Dendritic cell treated with granulocyte-macrophage colony-stimulating factor and Interleukin-4, amounts not matched to agents 40 ng/mL and 50 ng/mL, for 4 days (primary cell): ENCODE measurements at regions of chr11 and their contacts with region 1.

Region 1: GRCh38 chr11:60615497-60615896 is 83.9 kb upstream of the MS4A8 start:
- H3K4me3 Mint-ChIP-seq: no peak overlapping the region
- H3K27ac Mint-ChIP-seq: no peak overlapping the region
- H3K4me1 Mint-ChIP-seq: peaks cover 5% of the 10 kb centered on the region
- H3K27me3 Mint-ChIP-seq: no peaks in the 10 kb centered on the region

Region 2: GRCh38 chr11:60345489-60345888 is 270.0 kb before region 1 on chr11:
- intact Hi-C with region 1: loop called (anchors 5 kb)
- H3K4me3 Mint-ChIP-seq: no peak overlapping the region
- H3K27ac Mint-ChIP-seq: no peak overlapping the region
- H3K4me1 Mint-ChIP-seq: peaks cover 50% of the 10 kb centered on the region
- H3K27me3 Mint-ChIP-seq: peaks cover 2% of the 10 kb centered on the region

Region 3: DNA sequence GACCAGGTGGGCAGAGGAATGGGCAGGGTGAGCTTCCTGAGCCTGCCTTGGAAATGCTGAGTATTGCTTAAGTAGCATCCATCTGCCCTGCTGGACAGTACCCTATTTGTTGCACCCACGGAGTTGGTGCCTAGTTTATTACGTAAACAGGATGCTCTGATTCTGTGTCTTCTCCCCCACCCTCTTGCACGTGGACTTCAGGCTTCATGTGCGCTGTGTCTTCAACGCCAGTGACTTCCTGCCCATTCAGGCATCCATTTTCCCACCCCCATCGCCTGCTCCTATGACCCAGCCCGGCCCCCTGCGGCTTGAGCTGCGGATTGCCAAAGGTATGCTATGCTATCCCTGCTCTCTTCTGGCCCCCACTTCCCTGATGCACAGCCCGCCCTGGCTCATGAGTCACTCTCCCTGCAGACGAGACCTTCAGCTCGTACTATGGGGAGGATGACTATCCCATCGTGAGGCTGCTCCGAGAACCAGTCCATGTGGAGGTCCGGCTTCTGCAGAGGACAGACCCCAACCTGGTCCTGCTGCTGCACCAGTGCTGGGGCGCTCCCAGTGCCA is 257.5 kb after region 1 on chr11:
- intact Hi-C with region 1: no loop called
- H3K4me3 Mint-ChIP-seq: no peak overlapping the region
- H3K27ac Mint-ChIP-seq: no peak overlapping the region
- H3K4me1 Mint-ChIP-seq: peaks cover 12% of the 10 kb centered on the region
- H3K27me3 Mint-ChIP-seq: peaks cover 3% of the 10 kb centered on the region